Activated CD4-positive, alpha-beta T cell treated with anti-CD3 and anti-CD28 coated beads, Interleukin-2, amount 10 ng/mL, durations not matched to agents 7 days and 5 days (primary cell): ENCODE measurements at regions of chr1 and their contacts with region 1.

Region 1: DNA sequence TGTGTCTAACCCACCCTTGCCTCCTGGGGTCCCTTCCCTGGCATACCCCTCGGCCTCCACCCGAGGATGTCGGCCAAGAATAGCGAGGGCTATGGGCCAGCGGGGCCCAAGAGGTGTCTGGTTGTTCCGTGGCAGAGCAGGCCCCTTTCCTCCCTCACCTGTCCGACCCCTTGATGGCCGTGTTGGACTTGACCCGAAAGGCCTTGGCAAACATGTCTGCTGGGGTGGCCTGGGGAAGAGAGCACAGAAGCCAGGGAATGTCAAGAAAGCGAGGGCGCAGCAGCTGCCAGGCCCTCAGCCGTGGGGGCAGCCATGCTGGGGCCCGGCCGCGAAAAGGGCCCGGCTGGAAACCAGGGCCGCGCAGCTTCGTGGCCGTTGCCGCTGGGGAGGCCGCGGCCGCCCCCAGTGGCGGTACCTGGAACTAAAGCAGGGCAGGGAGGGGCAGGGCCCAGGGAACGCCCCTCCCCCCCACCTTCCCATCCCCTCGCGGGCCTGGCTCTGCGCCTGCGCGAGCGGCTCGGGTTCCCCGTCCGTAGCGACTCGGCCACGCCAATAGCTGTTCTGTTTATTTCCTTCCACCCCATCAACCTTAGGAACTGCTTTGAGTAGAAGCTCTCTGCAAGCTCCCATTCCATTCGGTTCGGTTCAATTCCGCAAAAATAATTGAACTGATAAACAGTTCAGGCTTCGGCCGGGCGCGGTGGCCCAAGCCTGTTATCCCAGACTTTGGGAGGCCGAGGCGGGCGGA is at the start of gene EIF2D:
- DNase-seq: peak; percentile 93
- H3K4me3 Mint-ChIP-seq: peak within 1 kb of the TSS; percentile 93
- H3K27ac Mint-ChIP-seq: peak within 1 kb of the TSS; percentile 89
- H3K4me1 Mint-ChIP-seq: peaks cover 33% of the 10 kb centered on the region
- H3K27me3 Mint-ChIP-seq: peaks cover 7% of the 10 kb centered on the region
- total RNA-seq, gene EIF2D: 44.5 to 51.6 TPM

Region 2: DNA sequence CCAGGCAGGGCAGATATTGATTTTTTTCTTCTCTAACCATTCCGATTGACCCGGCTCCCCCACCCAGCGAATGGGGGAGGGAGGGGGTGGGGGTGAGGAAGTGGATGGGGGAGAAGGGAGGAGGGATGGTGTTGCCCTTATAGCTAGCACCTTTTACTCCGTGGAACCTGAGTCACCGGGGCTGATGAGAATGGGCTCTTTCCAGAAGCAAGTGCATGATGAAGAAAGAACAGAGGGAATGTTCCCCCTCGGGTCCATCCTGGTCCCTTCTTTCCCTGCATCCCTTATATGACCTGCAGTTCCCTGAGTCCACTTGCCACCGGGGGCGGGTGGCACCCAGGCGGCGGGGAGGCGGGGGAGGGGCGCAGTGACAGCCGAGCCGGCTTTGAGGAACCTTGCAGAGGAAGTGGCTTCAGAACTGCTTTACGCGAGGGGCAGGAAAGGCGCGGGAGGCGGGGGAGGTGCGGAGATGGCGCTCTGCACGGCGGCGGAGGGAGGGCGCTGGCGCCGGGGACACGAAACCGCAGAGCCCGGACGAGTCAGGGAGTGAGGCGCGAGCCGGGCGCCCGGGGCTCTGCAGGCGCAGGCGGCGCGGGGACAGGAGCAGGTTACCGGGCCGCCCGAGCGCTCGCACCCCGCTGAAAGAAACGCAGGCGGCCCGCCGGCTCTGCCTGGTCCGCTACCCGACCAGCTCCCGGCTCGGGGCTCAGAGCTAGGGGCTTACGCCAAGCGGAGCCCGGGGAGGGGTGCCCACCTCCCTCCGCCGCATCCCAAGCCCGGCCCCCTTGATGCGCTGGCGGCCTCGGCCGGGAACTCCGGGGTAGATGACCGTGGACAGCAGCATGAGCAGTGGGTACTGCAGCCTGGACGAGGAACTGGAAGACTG is 55.3 kb before region 1 on chr1:
- CTCF ChIA-PET with region 1: interaction called, 14 read pairs
- POLR2A ChIA-PET with region 1: no interaction called
- DNase-seq: peak; percentile 92
- H3K4me3 Mint-ChIP-seq: peak overlapping the region; percentile 87
- H3K27ac Mint-ChIP-seq: peak overlapping the region; percentile 92
- H3K4me1 Mint-ChIP-seq: peaks cover 72% of the 10 kb centered on the region
- H3K27me3 Mint-ChIP-seq: no peaks in the 10 kb centered on the region

Region 3: GRCh38 chr1:206591226-206591625 is 21.1 kb before region 1 on chr1:
- CTCF ChIA-PET with region 1: interaction called, 38 read pairs
- POLR2A ChIA-PET with region 1: no interaction called
- DNase-seq: no peak
- H3K4me3 Mint-ChIP-seq: no peak overlapping the region
- H3K27ac Mint-ChIP-seq: peak overlapping the region; percentile 62
- H3K4me1 Mint-ChIP-seq: peaks cover 63% of the 10 kb centered on the region
- H3K27me3 Mint-ChIP-seq: no peaks in the 10 kb centered on the region

Region 4: DNA sequence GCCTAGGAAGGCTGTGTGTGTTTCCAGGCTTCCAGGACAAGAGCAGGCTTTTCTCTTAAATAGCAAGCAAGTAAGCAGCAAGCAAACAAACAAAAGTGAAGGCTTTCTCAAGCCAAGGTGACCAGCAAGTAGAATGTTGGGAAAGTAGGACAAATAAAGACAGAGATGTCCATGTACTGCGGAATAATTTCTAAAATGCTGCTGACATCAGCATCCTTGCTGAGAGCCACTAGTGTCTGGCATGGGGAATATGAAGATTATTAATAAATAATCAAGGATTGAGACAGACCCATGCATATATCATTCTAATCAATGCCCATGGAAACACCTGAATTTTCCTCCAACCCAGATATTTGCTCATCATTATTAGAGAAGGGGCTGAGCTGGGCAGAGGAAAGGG is 16.6 kb after region 1 on chr1:
- CTCF ChIA-PET with region 1: interaction called, 39 read pairs
- POLR2A ChIA-PET with region 1: no interaction called
- DNase-seq: no peak
- H3K4me3 Mint-ChIP-seq: no peak overlapping the region
- H3K27ac Mint-ChIP-seq: no peak overlapping the region
- H3K4me1 Mint-ChIP-seq: no peaks in the 10 kb centered on the region
- H3K27me3 Mint-ChIP-seq: peaks cover 28% of the 10 kb centered on the region

Region 5: DNA sequence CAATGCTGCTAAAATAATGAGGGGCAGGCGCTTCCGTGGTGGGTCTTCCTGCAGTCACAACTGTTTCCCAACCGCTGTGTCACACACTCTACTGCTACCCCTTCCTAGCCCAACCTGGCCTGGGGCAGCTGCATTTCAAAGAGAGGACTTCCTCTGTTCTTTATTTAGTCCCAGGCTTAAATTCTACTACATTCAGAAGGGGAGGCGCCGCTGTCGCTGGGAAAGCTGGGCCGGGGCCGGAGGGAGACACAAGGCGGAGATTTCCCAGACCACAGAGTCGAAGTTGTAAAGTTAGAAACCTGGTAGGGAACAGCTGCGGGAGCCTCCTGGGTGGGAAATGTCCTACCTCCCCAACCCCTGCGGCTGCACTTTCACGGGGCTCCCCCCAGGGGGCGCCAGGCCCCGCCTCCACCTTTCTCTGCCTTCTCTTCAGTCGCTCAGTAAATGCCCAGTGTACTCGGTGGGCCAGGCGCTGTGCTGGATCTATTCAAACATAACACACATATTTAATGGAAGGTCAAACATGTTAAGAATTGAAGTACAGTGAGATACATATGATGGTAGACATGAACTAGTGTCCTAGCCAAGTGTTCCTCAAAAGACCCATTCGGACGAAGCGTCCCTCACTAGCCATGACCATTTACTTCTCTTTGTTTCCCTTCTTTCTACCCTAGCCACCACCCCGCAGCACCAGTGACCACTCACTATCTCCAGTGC is 46.1 kb after region 1 on chr1:
- CTCF ChIA-PET with region 1: interaction called, 25 read pairs
- POLR2A ChIA-PET with region 1: no interaction called
- DNase-seq: peak; percentile 44
- H3K4me3 Mint-ChIP-seq: no peak overlapping the region
- H3K27ac Mint-ChIP-seq: no peak overlapping the region
- H3K4me1 Mint-ChIP-seq: peaks cover 14% of the 10 kb centered on the region
- H3K27me3 Mint-ChIP-seq: peaks cover 25% of the 10 kb centered on the region

Region 6: GRCh38 chr1:206687915-206688442 is 75.7 kb after region 1 on chr1:
- CTCF ChIA-PET with region 1: interaction called, 11 read pairs
- POLR2A ChIA-PET with region 1: no interaction called
- DNase-seq: no peak
- H3K4me3 Mint-ChIP-seq: no peak overlapping the region
- H3K27ac Mint-ChIP-seq: no peak overlapping the region
- H3K4me1 Mint-ChIP-seq: peaks cover 47% of the 10 kb centered on the region
- H3K27me3 Mint-ChIP-seq: peaks cover 5% of the 10 kb centered on the region